ENCODE measurements at regions of chr21 and their contacts with region 1.

Region 1: DNA sequence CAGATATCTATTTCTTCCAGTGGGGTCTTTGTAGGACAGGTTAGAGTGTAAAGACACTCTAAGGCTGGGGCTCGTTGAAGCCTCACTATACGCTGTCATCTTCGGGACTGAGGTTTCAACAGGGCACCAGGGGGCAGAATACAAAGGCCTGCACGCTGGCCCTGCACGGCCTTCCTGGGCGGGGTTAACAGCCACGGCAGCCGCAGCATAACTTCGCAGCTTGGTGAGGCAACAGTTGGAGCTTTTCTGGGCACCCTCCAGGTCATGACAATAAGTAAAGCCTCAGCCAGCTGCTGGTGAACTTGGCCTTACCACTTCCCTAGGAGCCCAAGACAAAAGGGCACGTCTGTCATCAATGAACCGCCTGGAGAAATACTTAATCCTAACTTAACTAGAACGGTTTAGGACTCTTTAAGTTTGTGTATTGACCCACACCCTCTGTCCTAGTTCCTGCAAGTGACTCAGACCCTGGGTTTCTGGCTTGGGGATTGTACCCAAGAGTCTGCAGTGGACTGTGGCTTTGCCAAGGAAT is 2.3 kb upstream of the RUNX1 start:
- DNase-seq: peak; percentile 92
- ATAC-seq: peak; percentile 44
- H3K4me3 Mint-ChIP-seq: peak overlapping the region; percentile 24
- H3K27ac Mint-ChIP-seq: peak overlapping the region; percentile 97
- H3K4me1 Mint-ChIP-seq: peaks cover 57% of the 10 kb centered on the region
- H3K27me3 Mint-ChIP-seq: no peaks in the 10 kb centered on the region
- CTCF ChIP-seq: peak; percentile 64

Region 2: DNA sequence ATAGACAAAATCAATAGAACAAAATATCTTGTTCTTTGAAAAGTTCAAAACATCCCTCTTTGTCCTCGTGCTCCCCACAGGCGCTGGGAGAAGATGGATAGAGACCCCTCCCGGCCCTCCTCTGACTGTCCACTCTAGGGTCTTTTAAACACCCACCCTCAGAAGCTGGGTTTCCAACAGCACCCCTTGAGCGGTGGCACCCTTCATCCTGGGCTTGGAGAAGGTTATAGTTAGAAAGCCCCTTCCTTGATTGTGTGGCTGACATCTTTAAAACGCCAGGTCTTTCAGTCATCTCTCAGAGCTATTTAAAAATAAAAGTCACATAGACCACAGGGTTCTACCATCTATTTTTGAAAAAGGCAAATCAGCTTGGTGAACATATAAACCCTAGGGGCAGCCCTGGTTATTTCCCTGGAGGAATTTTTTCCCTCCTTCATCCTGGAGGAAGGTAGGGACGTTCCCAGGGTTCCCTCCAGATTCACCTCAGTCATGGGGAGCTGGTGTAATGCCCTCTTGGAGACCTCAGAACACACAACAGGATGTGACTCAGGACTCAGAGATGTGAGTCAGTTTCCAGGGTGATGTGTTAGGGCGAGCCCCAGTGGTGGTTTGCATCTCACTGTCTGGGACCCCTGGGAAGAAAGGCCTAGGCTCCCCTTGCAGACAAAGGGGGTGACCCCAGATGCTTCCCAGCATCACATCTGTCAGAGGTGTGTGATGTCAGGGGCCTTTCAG is 244.0 kb before region 1 on chr21:
- CTCF ChIA-PET with region 1: no interaction called
- POLR2A ChIA-PET with region 1: no interaction called
- intact Hi-C with region 1: loop called (anchors 10 kb)
- DNase-seq: peak; percentile 87
- ATAC-seq: peak; percentile 91
- H3K4me3 Mint-ChIP-seq: peak overlapping the region; percentile 36
- H3K27ac Mint-ChIP-seq: peak overlapping the region; percentile 88
- H3K4me1 Mint-ChIP-seq: peaks cover 81% of the 10 kb centered on the region
- H3K27me3 Mint-ChIP-seq: no peaks in the 10 kb centered on the region
- CTCF ChIP-seq: no peak

Region 3: DNA sequence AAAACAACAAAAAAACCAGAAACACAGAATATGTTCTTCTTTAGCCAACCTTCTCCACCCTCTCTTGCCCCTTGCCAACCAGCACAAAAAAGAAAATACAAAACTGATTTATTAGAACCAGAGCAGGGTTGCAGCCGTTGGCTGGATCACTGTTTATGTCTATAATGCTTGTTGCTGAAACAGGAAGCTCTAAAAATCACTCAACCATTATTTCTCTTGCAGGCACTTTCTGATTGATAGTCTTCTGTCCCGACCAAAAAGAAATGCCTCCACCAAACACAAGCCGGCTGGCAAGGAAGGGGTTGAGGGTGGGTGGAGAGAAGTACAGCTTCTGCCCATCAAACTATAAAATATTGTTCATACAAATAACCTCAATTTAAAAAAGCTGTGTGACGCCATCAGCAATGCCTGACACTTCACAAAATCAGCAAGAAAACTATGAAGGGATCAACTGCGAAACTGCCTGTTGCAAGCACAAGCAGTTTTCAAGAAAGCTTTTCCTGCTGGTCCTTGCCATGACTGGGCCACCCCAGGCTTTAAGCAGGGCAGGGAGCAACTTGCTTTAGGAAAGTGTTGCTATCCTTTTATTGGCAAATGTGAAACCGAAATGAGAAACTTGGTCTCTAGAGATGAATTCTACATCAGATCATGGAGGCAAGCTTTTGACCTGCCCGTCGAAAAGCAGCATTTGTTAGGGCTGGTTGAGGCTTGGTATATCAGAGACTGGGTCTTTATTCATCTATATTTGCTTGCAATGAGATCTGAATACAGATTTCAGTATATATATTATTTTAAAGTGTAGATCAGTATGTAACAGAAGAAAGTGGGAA is 176.5 kb before region 1 on chr21:
- CTCF ChIA-PET with region 1: no interaction called
- POLR2A ChIA-PET with region 1: no interaction called
- intact Hi-C with region 1: no loop called
- DNase-seq: no peak
- ATAC-seq: no peak
- H3K4me3 Mint-ChIP-seq: no peak overlapping the region
- H3K27ac Mint-ChIP-seq: no peak overlapping the region
- H3K4me1 Mint-ChIP-seq: peaks cover 24% of the 10 kb centered on the region
- H3K27me3 Mint-ChIP-seq: no peaks in the 10 kb centered on the region
- CTCF ChIP-seq: no peak

Region 4: GRCh38 chr21:34946916-34947534 is 104.3 kb before region 1 on chr21:
- CTCF ChIA-PET with region 1: interaction called, 11 read pairs
- POLR2A ChIA-PET with region 1: interaction called, 9 read pairs
- intact Hi-C with region 1: loop called (anchors 5 kb)
- DNase-seq: no peak
- ATAC-seq: peak; percentile 67
- H3K4me3 Mint-ChIP-seq: no peak overlapping the region
- H3K27ac Mint-ChIP-seq: peak overlapping the region; percentile 95
- H3K4me1 Mint-ChIP-seq: peaks cover 86% of the 10 kb centered on the region
- H3K27me3 Mint-ChIP-seq: no peaks in the 10 kb centered on the region
- CTCF ChIP-seq: peak; percentile 42

Region 5: DNA sequence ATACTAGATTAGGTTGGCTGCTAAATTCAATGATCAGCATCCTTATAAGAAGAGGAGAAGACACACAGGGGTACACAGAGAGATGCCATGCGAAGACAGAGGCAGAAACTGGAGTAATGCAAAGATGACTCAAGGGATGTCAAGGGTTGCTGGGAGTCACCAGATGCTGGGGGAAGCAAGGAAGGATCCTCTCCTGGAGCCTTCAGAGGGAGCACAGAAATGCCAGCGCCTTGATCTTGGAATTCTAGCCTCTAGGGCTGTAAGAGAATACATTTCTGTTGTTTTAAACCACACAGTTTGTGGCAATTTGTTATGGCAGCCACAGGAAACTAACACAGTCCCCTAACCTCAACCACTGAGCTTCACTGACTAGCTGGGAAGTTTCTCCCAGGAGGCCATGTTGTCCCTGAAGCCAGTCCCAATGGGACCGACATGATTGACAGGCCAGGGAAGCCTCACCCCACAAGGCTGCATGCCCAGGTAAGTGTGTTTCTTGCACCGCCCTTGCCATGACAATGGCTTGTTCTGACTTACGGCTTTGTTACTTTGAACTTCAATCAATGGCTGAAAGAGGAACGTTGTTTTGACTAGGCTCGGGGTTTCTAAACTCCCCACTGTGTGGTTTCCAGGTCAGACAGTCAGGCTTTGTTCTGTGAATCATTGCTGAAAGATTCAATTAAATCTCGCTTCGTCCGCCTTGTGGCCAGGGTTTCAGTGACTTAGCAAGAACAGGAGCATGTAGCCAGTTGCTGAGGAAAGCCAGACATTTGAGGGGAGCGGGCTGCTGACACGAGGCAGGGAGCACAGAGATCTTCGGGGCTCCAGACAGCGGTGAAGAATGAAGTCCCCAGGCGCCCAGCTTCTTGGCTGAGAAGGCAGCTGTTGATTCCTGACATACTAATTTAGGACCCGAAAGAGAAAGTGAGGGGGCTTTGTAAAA is 64.5 kb before region 1 on chr21:
- CTCF ChIA-PET with region 1: interaction called, 56 read pairs
- POLR2A ChIA-PET with region 1: interaction called, 183 read pairs
- intact Hi-C with region 1: loop called (anchors 2 kb)
- DNase-seq: peak; percentile 94
- ATAC-seq: peak; percentile 46
- H3K4me3 Mint-ChIP-seq: peak overlapping the region; percentile 72
- H3K27ac Mint-ChIP-seq: peak overlapping the region; percentile 92
- H3K4me1 Mint-ChIP-seq: peaks cover 91% of the 10 kb centered on the region
- H3K27me3 Mint-ChIP-seq: no peaks in the 10 kb centered on the region
- CTCF ChIP-seq: no peak

Region 6: GRCh38 chr21:35026617-35027562 is 24.5 kb before region 1 on chr21:
- CTCF ChIA-PET with region 1: interaction called, 16 read pairs
- POLR2A ChIA-PET with region 1: interaction called, 100 read pairs
- intact Hi-C with region 1: no loop called
- DNase-seq: peak; percentile 91
- ATAC-seq: peak; percentile 79
- H3K4me3 Mint-ChIP-seq: peak overlapping the region; percentile 80
- H3K27ac Mint-ChIP-seq: peak overlapping the region; percentile 97
- H3K4me1 Mint-ChIP-seq: peaks cover 80% of the 10 kb centered on the region
- H3K27me3 Mint-ChIP-seq: no peaks in the 10 kb centered on the region
- CTCF ChIP-seq: no peak

Region 7: GRCh38 chr21:35095859-35096291 is 44.5 kb after region 1 on chr21:
- CTCF ChIA-PET with region 1: interaction called, 7 read pairs
- POLR2A ChIA-PET with region 1: interaction called, 10 read pairs
- intact Hi-C with region 1: no loop called
- DNase-seq: peak; percentile 17
- ATAC-seq: peak; percentile 41
- H3K4me3 Mint-ChIP-seq: no peak overlapping the region
- H3K27ac Mint-ChIP-seq: peak overlapping the region; percentile 74
- H3K4me1 Mint-ChIP-seq: peaks cover 25% of the 10 kb centered on the region
- H3K27me3 Mint-ChIP-seq: peaks cover 2% of the 10 kb centered on the region
- CTCF ChIP-seq: no peak

Region 8: GRCh38 chr21:35256467-35256988 is 205.2 kb after region 1 on chr21:
- CTCF ChIA-PET with region 1: no interaction called
- POLR2A ChIA-PET with region 1: no interaction called
- intact Hi-C with region 1: no loop called
- DNase-seq: no peak
- ATAC-seq: peak; percentile 34
- H3K4me3 Mint-ChIP-seq: no peak overlapping the region
- H3K27ac Mint-ChIP-seq: no peak overlapping the region
- H3K4me1 Mint-ChIP-seq: peaks cover 9% of the 10 kb centered on the region
- H3K27me3 Mint-ChIP-seq: peaks cover 5% of the 10 kb centered on the region
- CTCF ChIP-seq: no peak

Region 9: DNA sequence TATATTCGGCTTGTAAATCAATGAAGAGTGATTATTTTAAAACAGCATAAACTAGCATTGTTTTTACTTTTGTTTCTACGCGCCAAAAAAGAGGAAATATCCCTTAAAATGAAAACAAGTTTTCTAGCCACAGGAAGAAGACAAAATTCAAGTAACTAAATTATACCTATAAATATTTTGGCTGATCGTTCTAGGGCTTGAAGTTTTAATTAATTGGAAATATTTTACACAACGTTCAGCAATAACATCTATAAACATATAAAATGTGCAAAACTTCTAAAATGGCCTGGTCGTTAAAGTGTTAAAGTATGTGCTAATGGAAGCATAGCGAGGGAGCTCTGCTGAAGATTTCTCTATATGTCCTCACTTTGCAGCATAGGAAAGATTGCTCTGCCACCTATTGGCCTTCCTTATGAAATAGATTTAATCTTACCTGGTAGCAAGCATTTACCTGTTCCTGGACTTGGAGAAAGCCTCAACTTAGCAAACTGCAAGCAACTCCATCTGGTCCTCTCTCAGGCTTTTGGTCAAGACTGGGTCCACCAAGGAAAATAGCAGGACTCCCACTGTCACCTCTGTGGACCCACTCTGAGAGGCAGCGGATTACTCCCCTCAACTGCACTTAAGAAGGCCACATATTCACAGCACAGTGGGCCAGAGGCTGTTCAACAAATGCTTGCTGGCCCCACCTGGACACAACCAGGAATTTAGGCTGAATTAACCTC is 349.0 kb after region 1 on chr21:
- CTCF ChIA-PET with region 1: interaction called, 9 read pairs
- POLR2A ChIA-PET with region 1: no interaction called
- intact Hi-C with region 1: loop called (anchors 1 kb)
- DNase-seq: peak; percentile 43
- ATAC-seq: peak; percentile 93
- H3K4me3 Mint-ChIP-seq: no peak overlapping the region
- H3K27ac Mint-ChIP-seq: no peak overlapping the region
- H3K4me1 Mint-ChIP-seq: peaks cover 15% of the 10 kb centered on the region
- H3K27me3 Mint-ChIP-seq: peaks cover 1% of the 10 kb centered on the region
- CTCF ChIP-seq: peak; percentile 73

Measured in activated CD8-positive, alpha-beta T cell treated with anti-CD3 and anti-CD28 coated beads for 36 hours (primary cell).